HCT116 (cell line): ENCODE measurements at regions of chr14 and their contacts with region 1.

Region 1: GRCh38 chr14:94681300-94682060 is 69.3 kb downstream of the SERPINA3 start:
- DNase-seq: peak; percentile 74
- ATAC-seq: peak; percentile 95
- H3K4me3 ChIP-seq: no peak overlapping the region
- H3K27ac ChIP-seq: no peak overlapping the region
- H3K4me1 ChIP-seq: peaks cover 0 to 4% of the 10 kb centered on the region in 2 experiments; a peak in 1 of 4 replicates
- H3K27me3 ChIP-seq: no peaks in the 10 kb centered on the region
- CTCF ChIP-seq: peak; percentile 88 to 95 (median 93)
- POLR2A ChIP-seq: no peak
- RAD21 ChIP-seq: peak; percentile 95

Region 2: GRCh38 chr14:94423453-94424056 is 257.9 kb before region 1 on chr14:
- CTCF ChIA-PET with region 1: interaction called, 3 read pairs
- POLR2A ChIA-PET with region 1: no interaction called
- RAD21 ChIA-PET with region 1: no interaction called
- intact Hi-C with region 1: loop called (anchors 1 kb)
- DNase-seq: peak; percentile 75
- ATAC-seq: peak; percentile 99
- H3K4me3 ChIP-seq: no peak overlapping the region
- H3K27ac ChIP-seq: no peak overlapping the region
- H3K4me1 ChIP-seq: peaks cover 0 to 6% of the 10 kb centered on the region in 2 experiments; a peak in 1 of 4 replicates
- H3K27me3 ChIP-seq: peaks cover 10% of the 10 kb centered on the region
- CTCF ChIP-seq: peak; percentile 80 to 83 (median 82)
- POLR2A ChIP-seq: no peak
- RAD21 ChIP-seq: peak; percentile 74

Region 3: GRCh38 chr14:94439453-94440057 is 241.9 kb before region 1 on chr14:
- CTCF ChIA-PET with region 1: no interaction called
- POLR2A ChIA-PET with region 1: no interaction called
- RAD21 ChIA-PET with region 1: no interaction called
- intact Hi-C with region 1: loop called (anchors 1 kb)
- DNase-seq: no peak
- ATAC-seq: peak; percentile 52
- H3K4me3 ChIP-seq: no peak overlapping the region
- H3K27ac ChIP-seq: no peak overlapping the region
- H3K4me1 ChIP-seq: no peaks in the 10 kb centered on the region
- H3K27me3 ChIP-seq: no peaks in the 10 kb centered on the region; the same call in 1 of the 2 replicates
- CTCF ChIP-seq: peak in 2 of 3 experiments; percentile 23 to 30; a peak in 3 of 6 replicates
- POLR2A ChIP-seq: no peak
- RAD21 ChIP-seq: no peak

Region 4: DNA sequence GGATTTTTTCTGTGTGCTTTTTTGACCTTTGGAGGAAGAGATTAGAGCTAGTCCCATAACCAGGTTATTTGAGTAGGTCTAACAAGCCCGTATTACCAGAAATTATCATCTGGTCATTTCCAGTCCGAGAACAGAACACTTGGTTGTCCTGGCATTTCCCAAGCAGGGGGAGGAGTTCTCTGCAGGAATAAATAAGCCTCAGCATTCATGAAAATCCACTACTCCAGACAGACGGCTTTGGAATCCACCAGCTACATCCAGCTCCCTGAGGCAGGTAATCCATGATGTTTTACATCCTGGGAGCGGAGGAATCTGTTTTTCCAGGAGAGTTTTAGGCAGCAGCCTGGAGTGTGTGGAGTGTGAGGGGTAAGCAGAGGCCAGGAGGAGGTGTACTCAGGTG is 69.3 kb before region 1 on chr14 and contains the start of gene SERPINA3:
- CTCF ChIA-PET with region 1: no interaction called
- POLR2A ChIA-PET with region 1: no interaction called
- RAD21 ChIA-PET with region 1: no interaction called
- intact Hi-C with region 1: loop called (anchors 2 kb)
- DNase-seq: no peak
- ATAC-seq: no peak
- H3K4me3 ChIP-seq: no peak within 1 kb of the TSS
- H3K27ac ChIP-seq: no peak within 1 kb of the TSS
- H3K4me1 ChIP-seq: peaks cover 8 to 38% of the 10 kb centered on the region in 2 experiments; a peak in 3 of 4 replicates
- H3K27me3 ChIP-seq: no peaks in the 10 kb centered on the region
- CTCF ChIP-seq: no peak
- POLR2A ChIP-seq: no peak
- RAD21 ChIP-seq: no peak
- total RNA-seq, gene SERPINA3: 4.3 TPM

Region 5: GRCh38 chr14:94655169-94655710 is 26.2 kb before region 1 on chr14:
- CTCF ChIA-PET with region 1: no interaction called
- POLR2A ChIA-PET with region 1: no interaction called
- RAD21 ChIA-PET with region 1: no interaction called
- intact Hi-C with region 1: no loop called
- DNase-seq: no peak
- ATAC-seq: no peak
- H3K4me3 ChIP-seq: no peak overlapping the region
- H3K27ac ChIP-seq: no peak overlapping the region
- H3K4me1 ChIP-seq: no peaks in the 10 kb centered on the region
- H3K27me3 ChIP-seq: no peaks in the 10 kb centered on the region
- CTCF ChIP-seq: no peak
- POLR2A ChIP-seq: no peak
- RAD21 ChIP-seq: no peak